Left ventricle myocardium inferior (tissue), 1 donor: ENCODE measurements at regions of chr12 and their contacts with region 1.

Region 1: GRCh38 chr12:21666722-21667121 is 9.1 kb upstream of the LDHB start:
- DNase-seq: no peak
- H3K4me3 ChIP-seq: no peak overlapping the region
- H3K27ac ChIP-seq: no peak overlapping the region
- H3K4me1 ChIP-seq: no peaks in the 10 kb centered on the region
- H3K27me3 ChIP-seq: no peaks in the 10 kb centered on the region
- CTCF ChIP-seq: no peak

Region 2: DNA sequence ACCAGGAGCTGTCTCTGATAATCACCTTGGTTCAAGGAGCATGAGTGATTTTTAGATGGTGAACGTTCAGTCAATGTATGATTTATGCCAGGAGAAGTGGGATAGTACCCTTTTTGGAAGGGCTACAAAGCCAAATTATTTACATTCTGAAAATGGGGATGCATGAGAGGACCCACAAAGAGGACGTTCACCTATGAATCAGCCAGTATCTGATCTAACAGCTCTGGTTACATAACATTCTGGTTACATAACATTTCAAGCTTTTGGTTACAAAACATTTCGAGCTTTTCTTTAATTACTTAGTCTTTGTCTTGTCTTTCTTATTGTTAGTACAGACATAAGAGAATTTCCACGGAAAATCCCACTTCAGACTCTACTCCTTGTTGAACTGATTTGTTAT is 400.8 kb before region 1 on chr12:
- intact Hi-C with region 1: no loop called
- DNase-seq: no peak
- H3K4me3 ChIP-seq: no peak overlapping the region
- H3K27ac ChIP-seq: no peak overlapping the region
- H3K4me1 ChIP-seq: no peaks in the 10 kb centered on the region
- H3K27me3 ChIP-seq: no peaks in the 10 kb centered on the region
- CTCF ChIP-seq: no peak

Region 3: GRCh38 chr12:21438643-21439042 is 228.1 kb before region 1 on chr12:
- intact Hi-C with region 1: loop called (anchors 10 kb)
- DNase-seq: no peak
- H3K4me3 ChIP-seq: peak overlapping the region; percentile 81
- H3K27ac ChIP-seq: peak overlapping the region; percentile 90
- H3K4me1 ChIP-seq: peaks cover 30% of the 10 kb centered on the region
- H3K27me3 ChIP-seq: peaks cover 4% of the 10 kb centered on the region
- CTCF ChIP-seq: no peak

Region 4: DNA sequence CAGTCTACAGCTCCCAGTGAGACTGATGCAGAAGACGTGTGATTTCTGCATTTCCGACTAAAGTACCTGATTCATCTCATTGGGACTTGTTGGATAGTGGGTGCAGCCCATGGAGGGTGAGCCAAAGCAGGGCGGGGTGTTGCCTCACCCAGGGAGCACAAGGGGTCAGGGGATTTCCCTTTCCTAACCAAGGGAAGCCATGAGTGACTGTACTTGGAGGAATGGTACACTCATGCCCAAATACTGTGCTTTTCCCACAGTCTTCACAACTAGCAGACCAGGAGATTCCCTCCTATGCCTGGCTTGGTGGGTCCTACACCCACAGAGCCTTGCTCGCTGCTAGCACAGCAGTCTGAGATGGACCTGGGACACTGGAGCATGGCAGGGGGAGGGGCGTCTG is 295.5 kb after region 1 on chr12:
- intact Hi-C with region 1: no loop called
- DNase-seq: no peak
- H3K4me3 ChIP-seq: no peak overlapping the region
- H3K27ac ChIP-seq: no peak overlapping the region
- H3K4me1 ChIP-seq: no peaks in the 10 kb centered on the region
- H3K27me3 ChIP-seq: no peaks in the 10 kb centered on the region
- CTCF ChIP-seq: no peak

Region 5: GRCh38 chr12:22255097-22255496 is 588.4 kb after region 1 on chr12:
- intact Hi-C with region 1: no loop called
- DNase-seq: no peak
- H3K4me3 ChIP-seq: no peak overlapping the region
- H3K27ac ChIP-seq: no peak overlapping the region
- H3K4me1 ChIP-seq: peaks cover 10% of the 10 kb centered on the region
- H3K27me3 ChIP-seq: no peaks in the 10 kb centered on the region
- CTCF ChIP-seq: no peak